Heart right ventricle (tissue), 16 donors: ENCODE measurements at regions of chr5 and their contacts with region 1.

Region 1: DNA sequence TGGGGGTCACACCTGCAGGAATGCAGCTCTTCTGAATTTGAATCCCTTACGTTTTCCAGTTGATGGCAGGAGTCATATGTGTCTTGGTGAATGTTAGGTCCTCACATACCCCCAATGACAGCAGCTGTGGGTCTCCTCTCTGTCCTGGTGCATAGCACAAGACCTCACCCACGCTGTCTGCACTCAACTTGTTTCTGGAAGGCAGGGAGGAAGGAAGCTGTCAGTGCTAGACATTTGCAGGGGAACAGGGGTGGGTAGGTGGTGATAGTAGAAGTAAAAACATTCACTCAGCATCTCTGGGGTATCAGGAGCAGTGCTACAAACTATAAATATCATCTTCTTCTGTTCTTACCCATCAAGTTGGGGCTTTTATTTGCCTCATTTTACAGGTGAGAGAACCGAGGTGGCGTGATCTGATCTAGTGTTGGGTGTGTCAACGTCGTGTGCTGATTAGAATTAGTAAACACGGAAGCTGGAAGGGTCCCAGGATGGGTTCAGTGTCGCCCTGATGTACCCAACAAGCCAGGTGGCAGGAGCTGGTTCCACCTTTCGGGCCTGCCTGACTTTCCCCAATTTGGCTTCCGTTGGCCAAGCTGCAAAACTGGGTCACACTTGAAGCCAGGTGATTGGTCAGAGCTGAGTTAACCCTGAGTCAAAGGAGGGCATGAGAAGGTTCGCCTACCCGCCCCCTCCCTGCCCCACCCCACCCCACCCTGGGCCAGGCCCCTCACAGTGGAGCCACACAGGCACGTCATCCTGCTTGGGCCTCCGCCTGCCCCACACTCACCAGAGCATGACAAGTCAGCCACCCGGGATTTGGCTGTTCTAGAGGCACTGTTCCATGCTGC is 15.8 kb downstream of the ERGIC1 start:
- DNase-seq: no peak
- ATAC-seq: peak in 2 of 8 donors; percentile 9 to 20
- H3K4me3 ChIP-seq: no peak overlapping the region
- H3K27ac ChIP-seq: no peak overlapping the region
- H3K4me1 ChIP-seq: peaks cover 9 to 66% (median 30%) of the 10 kb centered on the region in 9 donors
- H3K27me3 ChIP-seq: no peaks in the 10 kb centered on the region
- CTCF ChIP-seq: no peak

Region 2: DNA sequence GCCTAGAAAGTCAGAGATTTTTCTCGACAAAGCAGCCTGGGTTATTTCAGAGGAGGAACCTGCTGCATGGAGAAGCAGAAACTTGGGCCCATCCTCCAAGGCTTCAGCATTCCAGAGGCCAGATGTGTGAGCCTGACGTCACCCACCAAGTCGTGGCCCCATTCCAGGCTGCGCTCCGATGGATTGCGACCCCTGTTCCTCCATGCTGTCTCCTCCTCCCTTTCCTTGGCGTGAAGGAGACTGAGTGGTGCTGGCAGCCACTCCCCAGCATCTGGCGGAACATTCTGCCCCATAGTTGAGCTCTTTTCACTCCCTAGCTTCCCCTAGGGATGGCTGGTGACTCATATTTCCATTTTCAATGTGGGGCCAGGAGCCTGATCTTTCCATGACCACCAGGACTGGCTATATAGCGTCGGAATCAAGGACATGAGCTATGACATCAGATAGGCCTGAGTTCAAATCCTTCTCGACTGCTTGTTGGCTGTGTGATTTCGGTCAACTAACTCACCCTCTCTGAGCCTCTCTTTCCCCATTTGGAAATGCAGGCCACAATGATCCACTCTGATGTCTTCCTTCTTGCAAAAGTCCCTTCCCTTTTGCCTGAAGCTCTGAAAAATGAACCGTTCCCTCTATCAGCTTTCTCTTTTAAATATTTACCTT is 54.4 kb before region 1 on chr5:
- intact Hi-C with region 1: loop called in 1 of 10 experiments (anchors 10 kb)
- DNase-seq: peak; percentile 93 to 96
- ATAC-seq: peak; percentile 93 to 97 (median 95)
- H3K4me3 ChIP-seq: no peak overlapping the region
- H3K27ac ChIP-seq: peak overlapping the region; percentile 19 to 95 (median 74)
- H3K4me1 ChIP-seq: peaks cover 6 to 84% (median 25%) of the 10 kb centered on the region in 9 donors
- H3K27me3 ChIP-seq: no peaks in the 10 kb centered on the region
- CTCF ChIP-seq: peak in 1 of 9 donors; percentile 6